ENCODE measurements at regions of chr11 and their contacts with region 1.

Region 1: DNA sequence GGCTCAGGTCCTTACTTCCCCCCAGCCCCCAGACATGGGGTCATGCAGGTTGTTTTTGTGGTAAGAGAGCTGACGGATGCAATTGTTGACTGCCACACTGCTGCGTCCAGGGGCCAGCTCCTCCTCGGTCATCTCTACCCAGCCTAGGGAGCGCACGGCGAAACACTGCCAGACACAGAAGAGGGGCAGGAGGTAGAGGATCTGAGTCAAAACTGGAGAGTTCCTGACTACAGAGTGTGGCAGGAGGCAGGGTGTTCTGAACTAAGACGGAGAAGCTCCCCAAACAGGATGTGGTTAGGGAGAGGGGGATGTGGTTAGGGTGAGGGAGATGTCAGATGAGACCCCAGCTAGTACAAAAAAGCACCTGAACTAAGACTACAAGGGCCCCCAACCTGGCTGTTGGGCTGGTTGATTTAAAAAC is 12.3 kb downstream of the SMPD1 start:
- DNase-seq: peak; percentile 46 to 95 (median 77)
- ATAC-seq: peak; percentile 76
- H3K4me3 ChIP-seq: peak overlapping the region; percentile 25 to 53
- H3K4me3 Mint-ChIP-seq: peak overlapping the region; percentile 77
- H3K27ac ChIP-seq: peak overlapping the region; percentile 77 to 84
- H3K27ac Mint-ChIP-seq: peak overlapping the region; percentile 94
- H3K4me1 ChIP-seq: peaks cover 95% of the 10 kb centered on the region
- H3K4me1 Mint-ChIP-seq: peaks cover 96% of the 10 kb centered on the region
- H3K27me3 ChIP-seq: no peaks in the 10 kb centered on the region
- H3K27me3 Mint-ChIP-seq: no peaks in the 10 kb centered on the region
- CTCF ChIP-seq: no peak

Region 2: GRCh38 chr11:6389921-6390724 is 12.4 kb before region 1 on chr11 and contains the start of gene SMPD1:
- CTCF ChIA-PET with region 1: interaction called, 12 read pairs
- POLR2A ChIA-PET with region 1: interaction called, 115 read pairs
- intact Hi-C with region 1: loop called (anchors 1 kb)
- DNase-seq: peak; percentile 90 to 97 (median 94)
- ATAC-seq: peak; percentile 88
- H3K4me3 ChIP-seq: peak within 1 kb of the TSS; percentile 84 to 90
- H3K4me3 Mint-ChIP-seq: peak within 1 kb of the TSS; percentile 93
- H3K27ac ChIP-seq: peak within 1 kb of the TSS; percentile 85 to 95
- H3K27ac Mint-ChIP-seq: peak within 1 kb of the TSS; percentile 98
- H3K4me1 ChIP-seq: peaks cover 52% of the 10 kb centered on the region
- H3K4me1 Mint-ChIP-seq: peaks cover 68% of the 10 kb centered on the region
- H3K27me3 ChIP-seq: no peaks in the 10 kb centered on the region
- H3K27me3 Mint-ChIP-seq: no peaks in the 10 kb centered on the region
- CTCF ChIP-seq: no peak
- total RNA-seq, gene SMPD1: 53.4 to 53.7 TPM

Region 3: GRCh38 chr11:6413791-6414201 is 11.2 kb after region 1 on chr11:
- CTCF ChIA-PET with region 1: interaction called, 52 read pairs
- POLR2A ChIA-PET with region 1: interaction called, 91 read pairs
- intact Hi-C with region 1: loop called (anchors 1 kb)
- DNase-seq: peak in 8 of 9 experiments; percentile 38 to 86 (median 71)
- ATAC-seq: peak; percentile 87
- H3K4me3 ChIP-seq: peak overlapping the region in 1 of 2 experiments; percentile 3
- H3K4me3 Mint-ChIP-seq: no peak overlapping the region
- H3K27ac ChIP-seq: peak overlapping the region; percentile 20 to 52
- H3K27ac Mint-ChIP-seq: no peak overlapping the region
- H3K4me1 ChIP-seq: peaks cover 84% of the 10 kb centered on the region
- H3K4me1 Mint-ChIP-seq: peaks cover 38% of the 10 kb centered on the region
- H3K27me3 ChIP-seq: no peaks in the 10 kb centered on the region
- H3K27me3 Mint-ChIP-seq: no peaks in the 10 kb centered on the region
- CTCF ChIP-seq: peak; percentile 12

Region 4: DNA sequence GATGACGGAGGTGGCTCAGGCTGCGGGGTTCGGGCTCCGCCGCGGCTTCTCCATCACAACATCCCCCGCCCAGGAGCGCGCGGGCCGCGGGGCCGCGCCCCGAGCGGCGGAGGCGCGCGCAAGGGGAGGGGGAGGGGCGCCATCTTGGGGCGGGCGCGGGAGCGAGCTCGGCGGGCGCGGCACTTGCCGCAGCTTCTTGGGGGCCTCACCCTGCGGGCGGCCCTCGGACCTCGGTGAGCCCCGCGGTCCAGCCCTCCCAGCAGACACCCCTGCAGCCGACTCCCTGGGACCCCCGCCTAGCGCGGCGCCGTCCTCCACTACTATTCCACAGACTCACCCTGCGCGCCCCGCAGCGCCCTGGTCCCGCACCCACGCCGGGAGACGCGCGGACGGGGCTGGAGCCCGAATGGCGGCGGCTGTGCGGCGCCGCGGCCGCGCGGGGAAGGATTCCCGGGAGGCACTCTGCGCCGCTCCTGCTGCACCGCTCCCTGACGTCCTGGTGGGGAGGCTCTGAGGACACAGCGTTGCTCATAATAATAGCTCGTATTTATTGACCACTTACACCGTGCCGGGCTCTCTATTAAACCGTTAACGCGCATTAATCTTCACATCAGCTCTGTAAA is 16.5 kb after region 1 on chr11 and contains the start of gene APBB1:
- CTCF ChIA-PET with region 1: interaction called, 52 read pairs
- POLR2A ChIA-PET with region 1: interaction called, 91 read pairs
- intact Hi-C with region 1: loop called (anchors 1 kb)
- DNase-seq: peak; percentile 49 to 88 (median 77)
- ATAC-seq: peak; percentile 69
- H3K4me3 ChIP-seq: peak within 1 kb of the TSS; percentile 51 to 81
- H3K4me3 Mint-ChIP-seq: peak within 1 kb of the TSS; percentile 84
- H3K27ac ChIP-seq: peak within 1 kb of the TSS; percentile 48 to 82
- H3K27ac Mint-ChIP-seq: peak within 1 kb of the TSS; percentile 89
- H3K4me1 ChIP-seq: peaks cover 46% of the 10 kb centered on the region
- H3K4me1 Mint-ChIP-seq: peaks cover 10% of the 10 kb centered on the region
- H3K27me3 ChIP-seq: no peaks in the 10 kb centered on the region
- H3K27me3 Mint-ChIP-seq: peaks cover 3% of the 10 kb centered on the region
- CTCF ChIP-seq: no peak
- total RNA-seq, gene APBB1: 130 to 147 TPM

Region 5: DNA sequence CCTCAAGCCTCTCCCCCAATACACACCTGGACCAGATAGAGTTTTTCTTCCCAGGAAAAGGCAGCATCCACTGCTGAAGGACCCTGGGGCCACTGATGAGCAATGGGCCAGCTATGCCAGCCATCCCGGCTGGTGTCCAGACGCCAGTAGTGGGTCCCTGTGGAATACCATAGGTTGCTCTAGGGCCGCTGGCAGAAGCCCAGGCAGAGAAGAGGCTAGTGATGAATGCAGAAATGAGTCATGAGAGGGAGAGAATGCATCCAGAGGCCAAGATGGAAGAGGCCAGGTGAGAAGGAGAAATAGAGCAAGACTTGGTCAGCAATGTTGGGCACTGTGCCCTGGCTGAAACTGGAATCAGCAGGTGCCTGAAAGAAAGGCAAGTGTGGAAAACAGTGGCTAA is 29.3 kb after region 1 on chr11:
- CTCF ChIA-PET with region 1: interaction called, 6 read pairs
- POLR2A ChIA-PET with region 1: interaction called, 14 read pairs
- intact Hi-C with region 1: no loop called
- DNase-seq: no peak
- ATAC-seq: no peak
- H3K4me3 ChIP-seq: no peak overlapping the region
- H3K4me3 Mint-ChIP-seq: no peak overlapping the region
- H3K27ac ChIP-seq: no peak overlapping the region
- H3K27ac Mint-ChIP-seq: no peak overlapping the region
- H3K4me1 ChIP-seq: no peaks in the 10 kb centered on the region
- H3K4me1 Mint-ChIP-seq: peaks cover 5% of the 10 kb centered on the region
- H3K27me3 ChIP-seq: no peaks in the 10 kb centered on the region
- H3K27me3 Mint-ChIP-seq: no peaks in the 10 kb centered on the region
- CTCF ChIP-seq: no peak

Measured in CD8-positive, alpha-beta T cell (primary cell).